CD4-positive, alpha-beta T cell (primary cell): ENCODE measurements at regions of chr11 and their contacts with region 1.

Region 1: GRCh38 chr11:3217676-3218482 is 734 bp downstream of the MRGPRG start:
- DNase-seq: peak in 1 of 14 experiments; percentile 28
- ATAC-seq: no peak
- H3K4me3 ChIP-seq: no peak overlapping the region
- H3K4me3 Mint-ChIP-seq: no peak overlapping the region
- H3K27ac ChIP-seq: no peak overlapping the region
- H3K27ac Mint-ChIP-seq: no peak overlapping the region
- H3K4me1 ChIP-seq: peaks cover 9% of the 10 kb centered on the region
- H3K4me1 Mint-ChIP-seq: peaks cover 4% of the 10 kb centered on the region
- H3K27me3 ChIP-seq: peaks cover 5 to 8% of the 10 kb centered on the region in 2 experiments
- H3K27me3 Mint-ChIP-seq: peaks cover 22% of the 10 kb centered on the region
- CTCF ChIP-seq: no peak

Region 2: GRCh38 chr11:3037040-3037944 is 180.6 kb before region 1 on chr11:
- CTCF ChIA-PET with region 1: no interaction called
- POLR2A ChIA-PET with region 1: no interaction called
- intact Hi-C with region 1: loop called in 1 of 2 experiments (anchors 5 kb)
- DNase-seq: peak in 12 of 14 experiments; percentile 22 to 72 (median 38)
- ATAC-seq: peak; percentile 89
- H3K4me3 ChIP-seq: no peak overlapping the region
- H3K4me3 Mint-ChIP-seq: no peak overlapping the region
- H3K27ac ChIP-seq: no peak overlapping the region
- H3K27ac Mint-ChIP-seq: peak overlapping the region; percentile 63
- H3K4me1 ChIP-seq: peaks cover 19% of the 10 kb centered on the region
- H3K4me1 Mint-ChIP-seq: peaks cover 30% of the 10 kb centered on the region
- H3K27me3 ChIP-seq: no peaks in the 10 kb centered on the region
- H3K27me3 Mint-ChIP-seq: no peaks in the 10 kb centered on the region
- CTCF ChIP-seq: peak; percentile 67

Region 3: DNA sequence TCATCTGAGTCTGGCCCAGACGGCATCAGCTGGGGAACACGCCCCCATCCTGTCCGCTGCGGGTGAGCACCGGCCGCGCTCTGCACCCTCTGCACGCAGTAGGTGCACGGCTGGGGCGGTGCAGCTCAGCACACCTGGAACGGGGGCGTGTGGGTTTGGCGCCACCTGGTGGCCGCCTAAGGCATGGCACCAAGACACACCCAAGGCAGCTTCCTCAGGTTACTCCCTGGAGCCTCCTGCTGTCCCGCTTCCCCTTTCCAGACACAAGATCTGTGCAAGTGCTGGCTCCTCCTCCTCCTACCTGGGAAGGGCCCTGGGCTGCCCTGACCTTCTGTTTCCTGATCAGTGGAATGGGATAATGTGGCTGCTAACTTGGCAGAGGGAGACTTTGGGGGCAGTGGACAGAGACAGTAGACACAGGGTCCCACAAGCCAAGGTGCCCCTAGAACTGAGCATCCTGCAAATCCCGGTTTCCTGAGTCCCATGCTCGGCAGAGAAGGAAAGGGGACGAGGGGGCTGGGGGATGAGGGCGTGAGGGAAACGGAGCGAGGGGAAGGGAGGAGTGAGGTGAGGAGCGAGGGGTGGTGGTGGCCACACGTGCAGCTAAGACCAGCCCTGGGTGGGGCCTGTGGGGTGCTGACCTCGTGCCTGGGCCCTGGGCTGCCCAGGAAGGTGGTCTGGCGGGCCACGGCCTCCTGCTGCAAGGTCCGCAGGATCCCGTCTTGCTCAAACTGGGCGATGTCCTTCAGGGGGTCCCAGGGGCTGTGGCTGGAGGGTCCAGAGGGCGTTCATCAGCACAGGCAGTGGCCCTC is 125.9 kb before region 1 on chr11:
- CTCF ChIA-PET with region 1: no interaction called
- POLR2A ChIA-PET with region 1: no interaction called
- intact Hi-C with region 1: no loop called
- DNase-seq: peak; percentile 49 to 87 (median 66)
- ATAC-seq: peak; percentile 93
- H3K4me3 ChIP-seq: no peak overlapping the region
- H3K4me3 Mint-ChIP-seq: no peak overlapping the region
- H3K27ac ChIP-seq: no peak overlapping the region
- H3K27ac Mint-ChIP-seq: no peak overlapping the region
- H3K4me1 ChIP-seq: peaks cover 6% of the 10 kb centered on the region
- H3K4me1 Mint-ChIP-seq: no peaks in the 10 kb centered on the region
- H3K27me3 ChIP-seq: peaks cover 0 to 3% of the 10 kb centered on the region in 2 experiments
- H3K27me3 Mint-ChIP-seq: no peaks in the 10 kb centered on the region
- CTCF ChIP-seq: peak; percentile 96

Region 4: GRCh38 chr11:3109921-3110706 is 107.8 kb before region 1 on chr11:
- CTCF ChIA-PET with region 1: no interaction called
- POLR2A ChIA-PET with region 1: no interaction called
- intact Hi-C with region 1: loop called (anchors 2 kb)
- DNase-seq: peak in 7 of 14 experiments; percentile 10 to 59 (median 46)
- ATAC-seq: peak; percentile 81
- H3K4me3 ChIP-seq: no peak overlapping the region
- H3K4me3 Mint-ChIP-seq: no peak overlapping the region
- H3K27ac ChIP-seq: no peak overlapping the region
- H3K27ac Mint-ChIP-seq: no peak overlapping the region
- H3K4me1 ChIP-seq: no peaks in the 10 kb centered on the region
- H3K4me1 Mint-ChIP-seq: no peaks in the 10 kb centered on the region
- H3K27me3 ChIP-seq: no peaks in the 10 kb centered on the region
- H3K27me3 Mint-ChIP-seq: no peaks in the 10 kb centered on the region
- CTCF ChIP-seq: peak; percentile 51

Region 5: GRCh38 chr11:3195251-3196160 is 22.4 kb before region 1 on chr11:
- CTCF ChIA-PET with region 1: no interaction called
- POLR2A ChIA-PET with region 1: no interaction called
- intact Hi-C with region 1: no loop called
- DNase-seq: peak in 1 of 14 experiments; percentile 13
- ATAC-seq: no peak
- H3K4me3 ChIP-seq: no peak overlapping the region
- H3K4me3 Mint-ChIP-seq: no peak overlapping the region
- H3K27ac ChIP-seq: no peak overlapping the region
- H3K27ac Mint-ChIP-seq: no peak overlapping the region
- H3K4me1 ChIP-seq: no peaks in the 10 kb centered on the region
- H3K4me1 Mint-ChIP-seq: no peaks in the 10 kb centered on the region
- H3K27me3 ChIP-seq: peaks cover 0 to 4% of the 10 kb centered on the region in 2 experiments
- H3K27me3 Mint-ChIP-seq: peaks cover 5% of the 10 kb centered on the region
- CTCF ChIP-seq: no peak